CD8-positive, alpha-beta memory T cell (primary cell): ENCODE measurements at regions of chr10 and their contacts with region 1.

Region 1: DNA sequence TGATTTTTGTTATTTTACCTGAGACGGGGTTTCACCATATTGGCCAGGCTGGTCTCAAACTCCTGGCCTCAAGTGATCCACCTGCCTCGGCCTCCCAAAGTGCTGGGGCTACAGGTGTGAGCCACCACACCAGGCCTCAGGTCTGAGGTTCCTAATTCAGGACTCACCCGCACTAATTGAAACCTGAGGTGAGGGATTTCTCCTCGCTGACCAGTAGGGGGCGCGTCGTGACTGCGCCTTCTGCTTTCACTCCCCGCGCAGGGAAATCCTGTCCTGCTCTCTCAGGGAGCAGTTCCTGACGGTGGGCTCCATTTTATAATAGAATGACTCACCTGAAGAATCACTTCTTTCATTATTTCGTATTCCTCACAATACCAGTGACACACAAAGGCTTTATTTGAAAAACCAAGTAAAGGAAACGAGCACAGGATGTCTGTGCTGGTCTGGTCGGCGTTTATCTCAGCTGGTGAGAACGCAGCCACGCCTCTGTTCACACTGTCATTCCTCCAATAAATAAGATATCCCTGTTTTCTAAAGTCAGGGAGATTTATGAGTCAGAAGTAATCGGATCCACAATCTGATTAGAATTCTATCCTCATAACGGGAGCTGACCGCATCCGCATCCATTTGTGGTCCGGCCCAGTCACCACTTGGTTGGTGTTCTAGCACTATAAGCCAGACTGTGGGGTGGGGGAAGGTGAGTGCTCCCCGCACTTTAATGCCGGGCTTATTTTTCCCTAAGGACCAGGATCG is 35.4 kb downstream of the BAG3 start:
- DNase-seq: peak; percentile 69 to 85 (median 72)
- H3K4me3 ChIP-seq: peak overlapping the region; percentile 35
- H3K4me3 Mint-ChIP-seq: peak overlapping the region; percentile 8 to 88 (median 81)
- H3K27ac ChIP-seq: no peak overlapping the region
- H3K27ac Mint-ChIP-seq: peak overlapping the region in 6 of 8 donors; percentile 50 to 90 (median 57)
- H3K4me1 ChIP-seq: peaks cover 6% of the 10 kb centered on the region
- H3K4me1 Mint-ChIP-seq: peaks cover 13 to 21% (median 18%) of the 10 kb centered on the region in 3 donors
- H3K27me3 ChIP-seq: no peaks in the 10 kb centered on the region
- H3K27me3 Mint-ChIP-seq: peaks cover 1 to 6% of the 10 kb centered on the region in 2 donors

Region 2: DNA sequence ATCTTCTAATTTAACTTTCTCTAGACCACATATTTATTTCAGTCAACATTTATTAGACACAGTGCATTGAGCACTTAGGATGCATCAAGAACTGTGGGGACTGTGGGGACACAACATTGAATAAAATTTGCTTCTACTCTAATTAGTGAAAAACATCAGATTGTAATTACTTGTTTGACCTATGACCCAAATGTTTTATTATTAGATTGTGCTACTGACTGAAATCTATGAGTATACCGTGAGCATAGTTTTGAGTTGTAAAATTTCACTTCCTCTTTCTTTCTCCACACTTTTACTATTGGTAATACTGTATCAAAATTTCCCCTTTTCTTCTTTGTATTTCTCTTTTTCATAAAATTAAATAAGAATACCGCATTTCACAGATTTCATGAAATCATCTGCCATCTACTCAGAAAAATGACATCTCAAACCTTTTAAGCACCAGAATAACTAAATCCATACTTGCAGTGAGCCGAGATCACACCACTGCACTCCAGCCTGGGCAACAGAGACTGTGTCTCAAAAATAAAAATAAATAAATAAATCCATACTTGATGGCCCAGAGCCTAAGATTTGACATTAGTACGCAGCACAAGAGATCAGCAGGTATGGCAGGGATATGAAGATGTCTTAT is 13.8 kb after region 1 on chr10:
- CTCF ChIA-PET with region 1: interaction called, 18 read pairs
- POLR2A ChIA-PET with region 1: no interaction called
- DNase-seq: no peak
- H3K4me3 ChIP-seq: no peak overlapping the region
- H3K4me3 Mint-ChIP-seq: no peak overlapping the region
- H3K27ac ChIP-seq: no peak overlapping the region
- H3K27ac Mint-ChIP-seq: no peak overlapping the region
- H3K4me1 ChIP-seq: peaks cover 6% of the 10 kb centered on the region
- H3K4me1 Mint-ChIP-seq: peaks cover 9 to 15% (median 12%) of the 10 kb centered on the region in 3 donors
- H3K27me3 ChIP-seq: no peaks in the 10 kb centered on the region
- H3K27me3 Mint-ChIP-seq: peaks cover 4 to 18% of the 10 kb centered on the region in 2 donors

Region 3: GRCh38 chr10:119769886-119770285 is 83.3 kb after region 1 on chr10:
- CTCF ChIA-PET with region 1: no interaction called
- POLR2A ChIA-PET with region 1: no interaction called
- DNase-seq: no peak
- H3K4me3 ChIP-seq: no peak overlapping the region
- H3K4me3 Mint-ChIP-seq: no peak overlapping the region
- H3K27ac ChIP-seq: no peak overlapping the region
- H3K27ac Mint-ChIP-seq: peak overlapping the region in 1 of 8 donors; percentile 33
- H3K4me1 ChIP-seq: no peaks in the 10 kb centered on the region
- H3K4me1 Mint-ChIP-seq: peaks cover 0 to 14% (median 6%) of the 10 kb centered on the region in 3 donors
- H3K27me3 ChIP-seq: no peaks in the 10 kb centered on the region
- H3K27me3 Mint-ChIP-seq: no peaks in the 10 kb centered on the region